Psoas muscle (tissue), 8 donors: ENCODE measurements at regions of chr15 and their contacts with region 1.

Region 1: DNA sequence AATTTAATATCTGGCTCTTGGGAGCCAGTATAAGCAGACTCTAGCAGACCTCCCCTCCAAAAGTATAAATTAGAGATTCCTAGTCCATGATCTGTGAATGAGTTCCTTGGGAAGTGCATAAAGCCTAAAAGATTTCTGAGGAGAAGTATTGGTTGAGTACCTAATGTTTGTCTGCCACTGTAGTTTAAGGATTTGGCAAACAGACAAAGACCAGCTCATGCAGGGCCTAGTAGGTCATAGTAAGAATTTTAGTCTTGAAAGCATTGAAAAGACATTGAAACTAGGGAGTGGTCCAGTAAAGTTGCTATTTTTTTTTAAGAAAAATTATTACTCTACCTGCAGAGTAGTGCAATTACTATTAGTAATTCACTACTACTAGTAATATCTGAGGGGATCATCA is 67.5 kb downstream of the SPRED1 start:
- DNase-seq: no peak
- ATAC-seq: no peak
- H3K4me3 ChIP-seq: no peak overlapping the region
- H3K27ac ChIP-seq: no peak overlapping the region
- H3K4me1 ChIP-seq: no peaks in the 10 kb centered on the region
- H3K27me3 ChIP-seq: no peaks in the 10 kb centered on the region
- CTCF ChIP-seq: no peak

Region 2: DNA sequence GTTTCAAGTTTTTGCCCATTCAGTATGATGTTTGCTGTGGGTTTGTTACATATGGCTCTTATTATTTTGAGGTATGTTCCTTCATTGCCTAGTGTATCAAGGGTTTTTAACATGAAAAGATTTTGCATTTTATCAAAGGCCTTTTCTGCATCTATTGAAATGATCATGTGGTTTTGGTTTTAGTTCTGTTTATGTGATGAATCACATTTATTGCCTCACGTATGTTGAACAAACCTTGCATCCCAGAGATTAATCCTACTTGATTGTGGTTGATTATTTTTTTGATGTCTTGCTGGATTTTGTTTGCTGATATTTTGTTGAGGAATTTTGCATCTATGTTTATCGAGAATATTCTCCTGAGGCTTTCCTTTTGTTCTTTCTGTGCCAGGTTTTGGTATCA is 346.3 kb before region 1 on chr15:
- intact Hi-C with region 1: no loop called
- DNase-seq: no peak
- ATAC-seq: no peak
- H3K4me3 ChIP-seq: no peak overlapping the region
- H3K27ac ChIP-seq: no peak overlapping the region
- H3K4me1 ChIP-seq: no peaks in the 10 kb centered on the region
- H3K27me3 ChIP-seq: no peaks in the 10 kb centered on the region
- CTCF ChIP-seq: no peak

Region 3: GRCh38 chr15:38252481-38253412 is 67.4 kb before region 1 on chr15 and contains the start of gene SPRED1:
- intact Hi-C with region 1: no loop called
- DNase-seq: peak; percentile 81 to 86
- ATAC-seq: peak; percentile 62 to 72 (median 68)
- H3K4me3 ChIP-seq: peak within 1 kb of the TSS; percentile 90
- H3K27ac ChIP-seq: peak within 1 kb of the TSS; percentile 93
- H3K4me1 ChIP-seq: peaks cover 3% of the 10 kb centered on the region
- H3K27me3 ChIP-seq: no peaks in the 10 kb centered on the region
- CTCF ChIP-seq: no peak
- total RNA-seq, gene SPRED1: 4.2 to 7.1 (median 5.7) TPM

Region 4: GRCh38 chr15:38266247-38266986 is 53.8 kb before region 1 on chr15:
- intact Hi-C with region 1: loop called in 1 of 2 experiments (anchors 10 kb)
- DNase-seq: no peak
- ATAC-seq: no peak
- H3K4me3 ChIP-seq: no peak overlapping the region
- H3K27ac ChIP-seq: no peak overlapping the region
- H3K4me1 ChIP-seq: no peaks in the 10 kb centered on the region
- H3K27me3 ChIP-seq: no peaks in the 10 kb centered on the region
- CTCF ChIP-seq: no peak

Region 5: DNA sequence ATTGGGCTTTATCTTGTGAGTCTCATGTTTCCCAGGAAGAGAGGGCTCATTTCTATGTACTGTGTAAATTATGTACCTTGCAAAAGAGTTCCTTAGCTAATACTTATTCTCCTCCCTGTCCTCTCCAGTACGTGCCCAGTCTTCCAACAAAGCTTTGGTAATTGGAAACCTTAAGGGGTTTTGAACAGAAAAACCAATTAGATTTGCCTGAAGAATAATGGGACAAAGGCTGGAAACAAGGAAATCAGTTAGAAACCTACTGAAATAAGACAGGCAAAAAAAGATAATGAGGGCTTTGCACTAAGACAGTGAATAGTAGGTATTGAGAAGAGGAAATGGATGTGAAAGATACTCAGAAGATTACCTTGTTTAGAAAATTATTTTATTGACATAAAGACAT is 14.9 kb after region 1 on chr15:
- intact Hi-C with region 1: no loop called
- DNase-seq: no peak
- ATAC-seq: no peak
- H3K4me3 ChIP-seq: no peak overlapping the region
- H3K27ac ChIP-seq: no peak overlapping the region
- H3K4me1 ChIP-seq: no peaks in the 10 kb centered on the region
- H3K27me3 ChIP-seq: no peaks in the 10 kb centered on the region
- CTCF ChIP-seq: no peak